ENCODE measurements at regions of chr2 and their contacts with region 1.

Region 1: GRCh38 chr2:105954891-105955290 is 210.2 kb downstream of the NCK2 start:
- DNase-seq: no peak
- ATAC-seq: no peak
- H3K4me3 Mint-ChIP-seq: no peak overlapping the region
- H3K27ac Mint-ChIP-seq: no peak overlapping the region
- H3K4me1 Mint-ChIP-seq: peaks cover 8% of the 10 kb centered on the region
- H3K27me3 Mint-ChIP-seq: peaks cover 2% of the 10 kb centered on the region
- CTCF ChIP-seq: no peak

Region 2: GRCh38 chr2:106065268-106065982 is 110.5 kb after region 1 on chr2:
- CTCF ChIA-PET with region 1: no interaction called
- POLR2A ChIA-PET with region 1: interaction called, 12 read pairs
- intact Hi-C with region 1: no loop called
- DNase-seq: no peak
- ATAC-seq: no peak
- H3K4me3 Mint-ChIP-seq: peak overlapping the region; percentile 44
- H3K27ac Mint-ChIP-seq: no peak overlapping the region
- H3K4me1 Mint-ChIP-seq: peaks cover 10% of the 10 kb centered on the region
- H3K27me3 Mint-ChIP-seq: peaks cover 41% of the 10 kb centered on the region
- CTCF ChIP-seq: no peak